ENCODE measurements at regions of chr10 and their contacts with region 1.

Region 1: GRCh38 chr10:60073781-60074656 is 167.7 kb upstream of the CCDC6 start:
- DNase-seq: peak; percentile 76
- ATAC-seq: peak; percentile 94
- H3K4me3 ChIP-seq: peak overlapping the region; percentile 24; the same call in 1 of the 2 replicates
- H3K27ac ChIP-seq: peak overlapping the region; percentile 67
- H3K4me1 ChIP-seq: peaks cover 14% of the 10 kb centered on the region
- H3K27me3 ChIP-seq: no peaks in the 10 kb centered on the region
- CTCF ChIP-seq: 0 out of 6 replicates have a peak, but pooled peaks of 1 of the 3 experiments have one; percentile 9
- EP300 ChIP-seq: peak; percentile 75 to 83; a peak in 3 of 4 replicates
- POLR2A ChIP-seq: no peak
- RAD21 ChIP-seq: peak; percentile 12; the same call in 1 of the 2 replicates

Region 2: DNA sequence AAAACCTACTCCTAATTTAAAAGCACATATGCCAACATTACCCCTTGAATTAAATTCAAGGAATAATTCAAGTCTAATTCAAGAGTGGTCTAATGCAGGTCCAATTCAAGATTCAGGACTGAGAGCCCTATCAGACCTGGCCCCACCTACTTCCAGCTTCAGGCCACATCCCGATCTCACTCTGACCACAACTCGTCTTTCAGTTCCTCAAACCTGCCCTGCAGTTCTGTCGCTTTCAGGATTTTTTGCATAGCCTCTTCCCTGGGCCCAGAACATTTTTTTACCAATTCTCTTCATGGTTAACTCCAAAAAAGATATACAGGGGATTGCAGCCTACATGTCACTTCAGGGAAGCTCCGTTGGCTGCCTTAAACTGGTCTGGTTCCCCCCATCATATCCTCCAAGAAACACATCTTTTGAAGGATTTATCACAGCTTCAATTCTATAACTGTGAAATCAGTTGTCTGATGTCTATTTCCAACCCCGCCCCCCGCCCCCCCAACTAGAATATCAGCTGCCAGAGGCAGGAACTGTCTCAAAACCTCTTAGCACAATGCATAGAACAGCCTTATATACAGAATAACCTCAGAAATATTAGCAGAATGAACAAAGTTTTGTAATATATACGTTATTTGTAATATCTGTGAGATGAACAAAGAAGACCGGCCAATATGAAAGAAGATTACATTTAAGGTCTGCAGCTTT is 188.4 kb before region 1 on chr10:
- CTCF ChIA-PET with region 1: no interaction called
- POLR2A ChIA-PET with region 1: no interaction called
- RAD21 ChIA-PET with region 1: no interaction called
- SMC1A ChIA-PET with region 1: no interaction called
- in situ Hi-C with region 1: no loop called
- intact Hi-C with region 1: loop called (anchors 2 kb)
- DNase-seq: peak; percentile 85
- ATAC-seq: peak; percentile 80
- H3K4me3 ChIP-seq: peak overlapping the region; percentile 30
- H3K27ac ChIP-seq: peak overlapping the region; percentile 54
- H3K4me1 ChIP-seq: peaks cover 41% of the 10 kb centered on the region
- H3K27me3 ChIP-seq: no peaks in the 10 kb centered on the region
- CTCF ChIP-seq: no peak
- EP300 ChIP-seq: peak; percentile 69 to 95
- POLR2A ChIP-seq: no peak
- RAD21 ChIP-seq: no peak

Region 3: GRCh38 chr10:60086862-60087261 is 12.8 kb after region 1 on chr10:
- CTCF ChIA-PET with region 1: no interaction called
- POLR2A ChIA-PET with region 1: no interaction called
- RAD21 ChIA-PET with region 1: no interaction called
- SMC1A ChIA-PET with region 1: interaction called, 4 read pairs
- in situ Hi-C with region 1: no loop called
- intact Hi-C with region 1: loop called (anchors 1 kb)
- DNase-seq: peak; percentile 31
- ATAC-seq: peak; percentile 87
- H3K4me3 ChIP-seq: no peak overlapping the region
- H3K27ac ChIP-seq: no peak overlapping the region
- H3K4me1 ChIP-seq: peaks cover 9% of the 10 kb centered on the region
- H3K27me3 ChIP-seq: no peaks in the 10 kb centered on the region
- CTCF ChIP-seq: no peak
- EP300 ChIP-seq: peak in 1 of 2 experiments; percentile 40; a peak in 1 of 4 replicates
- POLR2A ChIP-seq: no peak
- RAD21 ChIP-seq: no peak

Region 4: GRCh38 chr10:60099998-60100747 is 26.2 kb after region 1 on chr10:
- CTCF ChIA-PET with region 1: interaction called, 4 read pairs
- POLR2A ChIA-PET with region 1: interaction called, 6 read pairs
- RAD21 ChIA-PET with region 1: no interaction called
- SMC1A ChIA-PET with region 1: no interaction called
- in situ Hi-C with region 1: no loop called
- intact Hi-C with region 1: loop called (anchors 2 kb)
- DNase-seq: no peak
- ATAC-seq: peak; percentile 73
- H3K4me3 ChIP-seq: no peak overlapping the region
- H3K27ac ChIP-seq: no peak overlapping the region
- H3K4me1 ChIP-seq: peaks cover 9% of the 10 kb centered on the region
- H3K27me3 ChIP-seq: no peaks in the 10 kb centered on the region
- CTCF ChIP-seq: peak; percentile 51 to 55 (median 54); a peak in 5 of 6 replicates
- EP300 ChIP-seq: no peak
- POLR2A ChIP-seq: no peak
- RAD21 ChIP-seq: peak; percentile 66

Region 5: DNA sequence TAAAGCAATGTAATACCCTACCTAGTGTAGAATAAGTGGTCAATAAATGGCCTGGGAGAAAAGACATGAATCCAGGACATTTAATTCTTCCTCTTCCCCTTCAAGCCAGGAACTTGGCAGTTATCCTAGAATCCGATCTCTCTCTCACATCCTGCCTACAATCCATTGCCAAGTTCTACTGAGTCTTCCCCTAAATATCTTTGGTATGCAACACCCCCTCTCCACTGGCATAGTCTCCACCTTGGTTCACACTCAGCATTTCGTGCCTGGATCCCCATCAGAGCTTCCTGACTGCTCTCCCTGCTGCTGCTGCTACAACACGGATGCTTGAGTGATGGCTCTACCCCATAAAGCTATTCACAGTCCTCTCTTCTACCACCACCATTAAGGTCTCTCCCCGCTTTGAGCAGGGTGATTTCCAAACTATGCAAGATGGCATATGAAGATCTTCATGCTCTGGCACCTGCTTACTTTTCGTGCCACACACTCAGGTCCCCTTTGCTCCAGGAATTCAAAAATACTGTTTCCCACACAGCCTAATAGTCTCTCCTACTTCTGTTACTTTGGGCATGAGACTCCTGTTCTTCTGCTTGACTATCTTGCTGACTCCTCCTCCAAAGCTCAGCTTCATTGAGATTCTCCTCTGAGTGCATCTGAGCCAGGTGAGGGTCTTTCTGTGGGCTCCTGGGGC is 310.8 kb after region 1 on chr10:
- CTCF ChIA-PET with region 1: no interaction called
- POLR2A ChIA-PET with region 1: no interaction called
- RAD21 ChIA-PET with region 1: no interaction called
- SMC1A ChIA-PET with region 1: no interaction called
- in situ Hi-C with region 1: no loop called
- intact Hi-C with region 1: no loop called
- DNase-seq: no peak
- ATAC-seq: no peak
- H3K4me3 ChIP-seq: no peak overlapping the region
- H3K27ac ChIP-seq: no peak overlapping the region
- H3K4me1 ChIP-seq: no peaks in the 10 kb centered on the region
- H3K27me3 ChIP-seq: no peaks in the 10 kb centered on the region
- CTCF ChIP-seq: no peak
- EP300 ChIP-seq: no peak
- POLR2A ChIP-seq: no peak
- RAD21 ChIP-seq: no peak